ENCODE measurements at regions of chr7 and their contacts with region 1.

Region 1: DNA sequence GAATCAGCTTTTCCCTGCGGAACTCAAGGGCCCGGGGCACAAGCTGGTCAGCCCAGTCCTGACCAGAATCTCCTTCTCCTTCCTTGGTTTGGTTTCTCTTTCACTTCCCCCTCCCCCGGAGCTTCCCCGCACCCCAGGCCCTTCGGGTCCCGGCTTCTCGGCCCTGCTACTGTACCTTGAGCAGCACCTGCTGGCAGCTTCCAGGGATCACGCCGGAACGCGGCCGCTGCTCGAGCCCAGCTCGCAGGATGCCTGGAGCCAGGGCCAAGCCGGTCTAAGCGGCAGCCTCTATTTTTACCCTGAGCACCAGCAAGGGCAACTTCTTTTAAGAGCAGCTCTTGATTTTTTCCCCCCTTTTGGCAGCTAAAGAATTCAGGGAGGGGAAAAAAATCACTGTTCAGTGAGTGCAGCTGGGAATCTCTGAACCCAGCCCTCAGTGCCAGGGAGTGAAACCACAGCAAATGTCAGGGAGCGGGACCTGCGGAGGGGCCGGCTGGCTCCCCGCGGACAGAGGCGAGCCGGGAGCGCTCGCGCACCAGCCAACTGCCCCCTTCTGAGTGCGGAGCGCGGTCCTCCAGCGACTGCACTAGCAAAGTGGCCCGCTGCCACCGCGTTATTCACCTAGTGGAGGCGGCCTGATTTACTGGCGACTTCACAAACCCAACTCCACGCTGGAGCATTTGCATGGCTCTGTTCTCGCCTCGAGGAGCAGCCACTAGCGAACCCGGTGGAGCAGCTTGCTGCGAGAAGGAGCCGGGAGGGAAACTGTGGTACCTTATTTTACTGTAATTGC is 2.4 kb upstream of the INHBA start:
- DNase-seq: peak; percentile 88
- H3K4me3 ChIP-seq: peak overlapping the region; percentile 68
- H3K27ac ChIP-seq: peak overlapping the region; percentile 91
- H3K27me3 ChIP-seq: no peaks in the 10 kb centered on the region
- CTCF ChIP-seq: peak; percentile 89

Region 2: DNA sequence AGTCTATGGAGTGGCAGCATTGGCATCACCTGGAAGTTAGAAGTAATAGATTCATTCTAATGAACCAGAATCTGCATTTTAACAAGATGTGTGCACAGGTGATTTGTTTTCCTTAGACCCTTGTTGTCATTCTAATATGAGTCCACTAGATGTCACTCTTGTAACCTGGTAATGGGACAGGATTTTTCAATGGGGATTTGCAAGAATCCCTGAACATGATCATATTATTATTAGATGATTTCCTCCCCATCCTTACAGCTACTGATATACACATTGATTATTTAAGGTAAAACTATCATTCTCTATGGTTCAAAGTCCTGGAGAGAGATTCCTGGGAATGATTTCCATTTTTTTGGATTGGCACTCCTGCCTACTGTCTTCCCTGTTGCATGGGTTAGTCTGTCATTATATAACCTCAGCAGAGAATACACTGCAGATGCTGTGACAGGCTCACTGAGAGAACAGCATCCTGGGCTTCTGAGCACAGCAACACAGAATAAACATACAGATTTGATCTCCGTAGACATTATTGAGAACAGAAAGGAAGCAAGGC is 1375.6 kb before region 1 on chr7:
- CTCF ChIA-PET with region 1: interaction called, 10 read pairs
- POLR2A ChIA-PET with region 1: no interaction called
- DNase-seq: peak; percentile 32
- H3K4me3 ChIP-seq: no peak overlapping the region
- H3K27ac ChIP-seq: no peak overlapping the region
- H3K27me3 ChIP-seq: no peaks in the 10 kb centered on the region
- CTCF ChIP-seq: peak; percentile 73

Region 3: GRCh38 chr7:40763318-40764287 is 941.7 kb before region 1 on chr7:
- CTCF ChIA-PET with region 1: interaction called, 16 read pairs
- POLR2A ChIA-PET with region 1: interaction called, 5 read pairs
- DNase-seq: peak; percentile 54
- H3K4me3 ChIP-seq: peak overlapping the region; percentile 35
- H3K27ac ChIP-seq: peak overlapping the region; percentile 25
- H3K27me3 ChIP-seq: no peaks in the 10 kb centered on the region
- CTCF ChIP-seq: peak; percentile 76

Region 4: GRCh38 chr7:41716691-41717090 is 11.4 kb after region 1 on chr7:
- CTCF ChIA-PET with region 1: interaction called, 12 read pairs
- POLR2A ChIA-PET with region 1: no interaction called
- DNase-seq: no peak
- H3K4me3 ChIP-seq: no peak overlapping the region
- H3K27ac ChIP-seq: no peak overlapping the region
- H3K27me3 ChIP-seq: no peaks in the 10 kb centered on the region
- CTCF ChIP-seq: no peak

Measured in AG04450 (cell line).